Thyroid gland (tissue), 4 donors: ENCODE measurements at regions of chr3 and their contacts with region 1.

Region 1: GRCh38 chr3:134378384-134378783 is 4.1 kb upstream of the AMOTL2 start:
- DNase-seq: peak; percentile 76 to 78
- H3K4me3 ChIP-seq: no peak overlapping the region
- H3K27ac ChIP-seq: peak overlapping the region in 1 of 3 donors; percentile 15
- H3K4me1 ChIP-seq: peaks cover 22 to 33% of the 10 kb centered on the region in 2 donors
- H3K27me3 ChIP-seq: no peaks in the 10 kb centered on the region
- CTCF ChIP-seq: peak in 4 of 6 experiments; percentile 55 to 66 (median 60)
- POLR2A ChIP-seq: no peak

Region 2: GRCh38 chr3:134308350-134308891 is 70.0 kb before region 1 on chr3:
- intact Hi-C with region 1: loop called (anchors 5 kb)
- DNase-seq: peak; percentile 85 to 86
- H3K4me3 ChIP-seq: no peak overlapping the region
- H3K27ac ChIP-seq: peak overlapping the region; percentile 79 to 94 (median 90)
- H3K4me1 ChIP-seq: peaks cover 33 to 50% of the 10 kb centered on the region in 2 donors
- H3K27me3 ChIP-seq: no peaks in the 10 kb centered on the region
- CTCF ChIP-seq: peak; percentile 99 to 100 (median 100)
- POLR2A ChIP-seq: no peak